Activated CD4-positive, alpha-beta T cell treated with anti-CD3 and anti-CD28 coated beads for 36 hours (primary cell): ENCODE measurements at regions of chr10 and their contacts with region 1.

Region 1: GRCh38 chr10:14604181-14605142 is 170.2 kb downstream of the FAM107B start:
- DNase-seq: peak; percentile 87
- ATAC-seq: peak; percentile 40
- H3K4me3 Mint-ChIP-seq: peak overlapping the region; percentile 85
- H3K27ac Mint-ChIP-seq: peak overlapping the region; percentile 99
- H3K4me1 Mint-ChIP-seq: peaks cover 72% of the 10 kb centered on the region
- H3K27me3 Mint-ChIP-seq: no peaks in the 10 kb centered on the region

Region 2: DNA sequence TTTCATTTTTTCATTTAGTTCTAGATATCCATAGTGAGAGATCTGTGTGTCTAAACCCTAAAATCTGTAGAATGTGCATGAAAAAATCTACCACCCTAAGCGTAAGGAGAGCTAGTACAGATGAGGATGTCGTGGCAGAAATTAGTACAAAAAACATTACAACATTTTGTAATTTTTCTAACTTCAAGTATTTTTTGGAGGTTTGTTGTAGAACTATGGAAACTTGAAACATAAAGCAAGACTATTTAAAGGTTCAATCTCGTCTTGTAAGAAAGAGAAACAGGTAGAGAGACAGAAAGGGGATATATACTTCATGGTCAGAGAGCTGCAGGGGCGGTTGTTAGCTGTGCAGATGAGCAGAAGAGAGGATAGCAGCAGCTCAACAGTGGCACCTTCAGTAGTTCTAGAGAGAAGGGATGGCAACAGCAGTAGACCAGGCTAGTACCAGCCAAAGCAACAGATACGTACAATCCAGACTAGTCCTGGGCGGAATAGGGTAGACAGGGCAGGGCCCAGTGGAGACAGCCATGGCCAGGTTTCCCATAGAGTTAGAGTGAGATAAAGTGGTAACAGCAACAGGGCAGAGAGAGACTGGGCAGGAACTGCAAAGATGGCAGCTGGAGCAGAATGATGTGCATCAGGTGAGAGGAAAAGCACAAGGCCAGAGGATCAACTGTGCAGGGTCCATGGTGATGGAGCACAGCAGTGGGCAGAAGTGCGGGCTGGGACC is 419.0 kb before region 1 on chr10:
- CTCF ChIA-PET with region 1: no interaction called
- POLR2A ChIA-PET with region 1: interaction called, 10 read pairs
- intact Hi-C with region 1: loop called in 1 of 2 experiments (anchors 1 kb)
- DNase-seq: peak; percentile 73
- ATAC-seq: peak; percentile 92
- H3K4me3 Mint-ChIP-seq: peak overlapping the region; percentile 63
- H3K27ac Mint-ChIP-seq: peak overlapping the region; percentile 97
- H3K4me1 Mint-ChIP-seq: peaks cover 31% of the 10 kb centered on the region
- H3K27me3 Mint-ChIP-seq: peaks cover 29% of the 10 kb centered on the region

Region 3: DNA sequence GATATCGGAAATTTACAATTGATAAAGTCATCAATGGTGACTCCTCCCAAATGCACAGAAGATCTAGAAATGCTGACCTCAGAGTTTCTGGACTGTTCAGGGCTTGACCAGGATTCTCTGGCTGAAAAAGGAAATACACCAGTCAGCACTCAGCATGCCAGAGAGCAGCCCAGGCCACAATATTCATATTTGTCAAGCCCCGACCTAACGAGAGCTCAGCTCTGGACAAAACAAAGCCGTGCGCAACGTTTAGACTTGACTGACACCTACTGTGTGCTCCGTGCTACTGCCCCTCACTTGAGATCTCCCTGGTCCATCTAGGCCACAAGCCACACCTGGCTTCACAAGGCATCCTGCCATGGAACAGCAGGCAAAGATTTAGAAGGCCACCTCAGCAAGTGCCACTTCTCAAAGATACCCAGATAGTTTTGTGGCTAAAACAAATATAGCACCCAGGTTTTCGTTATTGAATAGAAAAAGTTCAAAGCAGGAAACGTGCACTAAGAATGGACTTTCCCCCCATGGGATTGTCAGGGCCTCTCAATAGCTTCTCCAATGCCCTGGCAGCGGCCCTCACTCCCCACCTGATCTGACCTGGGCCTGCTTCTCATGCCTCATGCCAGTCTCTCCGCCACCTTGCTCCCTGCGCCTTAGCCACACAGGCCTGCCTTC is 48.0 kb before region 1 on chr10:
- CTCF ChIA-PET with region 1: interaction called, 4 read pairs
- POLR2A ChIA-PET with region 1: interaction called, 6 read pairs
- intact Hi-C with region 1: loop called in 1 of 2 experiments (anchors 2 kb)
- DNase-seq: peak; percentile 48
- ATAC-seq: peak; percentile 37
- H3K4me3 Mint-ChIP-seq: peak overlapping the region; percentile 17
- H3K27ac Mint-ChIP-seq: peak overlapping the region; percentile 86
- H3K4me1 Mint-ChIP-seq: peaks cover 93% of the 10 kb centered on the region
- H3K27me3 Mint-ChIP-seq: no peaks in the 10 kb centered on the region

Region 4: GRCh38 chr10:14648005-14648765 is 43.7 kb after region 1 on chr10:
- CTCF ChIA-PET with region 1: interaction called, 3 read pairs
- POLR2A ChIA-PET with region 1: interaction called, 6 read pairs
- intact Hi-C with region 1: loop called (anchors 1 kb)
- DNase-seq: peak; percentile 79
- ATAC-seq: peak; percentile 66
- H3K4me3 Mint-ChIP-seq: peak overlapping the region; percentile 65
- H3K27ac Mint-ChIP-seq: peak overlapping the region; percentile 98
- H3K4me1 Mint-ChIP-seq: peaks cover 85% of the 10 kb centered on the region
- H3K27me3 Mint-ChIP-seq: no peaks in the 10 kb centered on the region

Region 5: DNA sequence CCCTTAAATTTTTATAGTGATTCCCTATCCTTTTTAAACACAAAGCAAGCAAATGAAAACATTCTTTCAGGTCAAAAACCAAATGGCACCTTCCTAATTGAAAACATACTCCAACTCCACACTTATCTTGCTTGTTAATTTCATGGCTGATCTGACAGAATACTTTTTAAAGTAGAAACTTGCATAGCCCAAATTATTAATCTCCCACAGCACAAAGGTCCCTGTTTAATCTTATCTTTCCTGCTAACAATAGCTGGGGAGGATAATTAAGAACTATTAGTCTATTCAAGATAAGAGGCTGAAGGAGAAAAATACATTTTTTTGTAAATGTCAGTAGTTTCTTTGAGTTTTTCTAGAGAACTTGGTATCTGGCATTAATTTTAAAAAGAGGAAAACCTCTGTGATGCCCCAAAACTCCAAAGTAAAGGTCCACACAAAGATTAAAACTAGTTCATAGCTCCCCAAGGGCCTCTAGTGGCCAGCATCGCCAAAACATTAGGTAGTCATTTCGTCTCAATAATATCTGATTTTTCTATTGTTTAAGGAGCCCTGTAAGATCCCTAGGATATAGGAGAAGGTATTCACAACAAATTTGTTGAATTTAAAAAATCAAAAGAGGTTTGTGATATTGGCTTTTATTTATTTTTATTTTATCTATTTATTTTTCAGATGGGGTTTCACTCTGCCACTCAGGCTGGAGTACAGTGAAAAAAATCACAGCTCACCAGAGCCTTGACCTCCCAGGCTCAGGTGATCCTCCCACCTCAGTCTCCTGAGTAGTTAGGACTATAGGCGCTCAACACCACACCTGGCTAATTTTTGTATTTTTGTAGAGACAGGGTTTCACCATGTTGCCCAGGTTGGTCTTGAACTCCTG is 218.7 kb after region 1 on chr10:
- CTCF ChIA-PET with region 1: no interaction called
- POLR2A ChIA-PET with region 1: no interaction called
- intact Hi-C with region 1: loop called in 1 of 2 experiments (anchors 5 kb)
- DNase-seq: peak; percentile 64
- ATAC-seq: peak; percentile 64
- H3K4me3 Mint-ChIP-seq: no peak overlapping the region
- H3K27ac Mint-ChIP-seq: peak overlapping the region; percentile 65
- H3K4me1 Mint-ChIP-seq: peaks cover 6% of the 10 kb centered on the region
- H3K27me3 Mint-ChIP-seq: no peaks in the 10 kb centered on the region

Region 6: GRCh38 chr10:14959276-14960057 is 355.0 kb after region 1 on chr10 and contains the start of gene MEIG1:
- CTCF ChIA-PET with region 1: no interaction called
- POLR2A ChIA-PET with region 1: no interaction called
- intact Hi-C with region 1: loop called in 1 of 2 experiments (anchors 1 kb)
- DNase-seq: peak; percentile 96
- ATAC-seq: peak; percentile 87
- H3K4me3 Mint-ChIP-seq: peak within 1 kb of the TSS; percentile 97
- H3K27ac Mint-ChIP-seq: peak within 1 kb of the TSS; percentile 98
- H3K4me1 Mint-ChIP-seq: peaks cover 26% of the 10 kb centered on the region
- H3K27me3 Mint-ChIP-seq: no peaks in the 10 kb centered on the region
- total RNA-seq, gene MEIG1: 0.81 to 1.1 TPM

Region 7: DNA sequence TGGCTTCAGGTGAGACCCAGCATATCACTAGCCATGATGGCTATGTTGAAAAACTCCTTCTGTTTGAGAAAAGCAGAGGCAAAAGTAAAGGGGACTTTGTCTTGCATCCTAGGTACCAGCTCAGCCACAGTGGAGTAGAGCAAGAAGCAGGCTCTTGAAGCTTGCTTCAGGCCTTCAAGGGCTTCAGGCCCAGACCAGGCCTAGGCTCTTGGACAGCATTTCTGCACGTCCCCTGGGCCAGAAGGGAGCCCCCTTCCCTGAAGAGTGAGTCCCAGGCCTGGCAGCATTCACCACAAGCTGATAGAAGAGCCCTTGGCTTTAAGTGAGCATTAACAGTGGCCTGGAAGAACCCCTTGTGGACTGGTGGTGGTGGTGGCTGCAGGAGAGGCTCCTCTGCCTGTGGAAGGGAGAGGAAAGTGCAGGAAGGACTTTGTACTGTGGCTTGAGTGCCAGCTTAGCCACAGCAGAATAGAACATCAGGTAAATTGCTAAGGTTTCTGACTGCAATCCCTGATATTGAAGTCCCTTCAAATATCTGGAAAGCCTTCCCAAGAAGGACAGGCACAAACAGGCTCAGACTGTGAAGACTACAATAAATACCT is 794.7 kb after region 1 on chr10:
- CTCF ChIA-PET with region 1: no interaction called
- POLR2A ChIA-PET with region 1: no interaction called
- intact Hi-C with region 1: no loop called
- DNase-seq: no peak
- ATAC-seq: no peak
- H3K4me3 Mint-ChIP-seq: no peak overlapping the region
- H3K27ac Mint-ChIP-seq: no peak overlapping the region
- H3K4me1 Mint-ChIP-seq: no peaks in the 10 kb centered on the region
- H3K27me3 Mint-ChIP-seq: no peaks in the 10 kb centered on the region